ENCODE measurements at regions of chr1 and their contacts with region 1.

Region 1: GRCh38 chr1:40143891-40144575 is 17.2 kb upstream of the RLF start:
- DNase-seq: no peak
- H3K4me3 ChIP-seq: no peak overlapping the region
- H3K27ac ChIP-seq: no peak overlapping the region
- H3K4me1 ChIP-seq: no peaks in the 10 kb centered on the region
- H3K27me3 ChIP-seq: peaks cover 60% of the 10 kb centered on the region
- CTCF ChIP-seq: peak; percentile 85

Region 2: GRCh38 chr1:40404670-40405462 is 260.8 kb after region 1 on chr1:
- intact Hi-C with region 1: loop called (anchors 10 kb)
- DNase-seq: no peak
- H3K4me3 ChIP-seq: no peak overlapping the region
- H3K27ac ChIP-seq: no peak overlapping the region
- H3K4me1 ChIP-seq: peaks cover 6% of the 10 kb centered on the region
- H3K27me3 ChIP-seq: no peaks in the 10 kb centered on the region
- CTCF ChIP-seq: peak; percentile 92

Measured in left ventricle myocardium inferior (tissue), 1 donor.